ENCODE measurements at regions of chr13 and their contacts with region 1.

Region 1: DNA sequence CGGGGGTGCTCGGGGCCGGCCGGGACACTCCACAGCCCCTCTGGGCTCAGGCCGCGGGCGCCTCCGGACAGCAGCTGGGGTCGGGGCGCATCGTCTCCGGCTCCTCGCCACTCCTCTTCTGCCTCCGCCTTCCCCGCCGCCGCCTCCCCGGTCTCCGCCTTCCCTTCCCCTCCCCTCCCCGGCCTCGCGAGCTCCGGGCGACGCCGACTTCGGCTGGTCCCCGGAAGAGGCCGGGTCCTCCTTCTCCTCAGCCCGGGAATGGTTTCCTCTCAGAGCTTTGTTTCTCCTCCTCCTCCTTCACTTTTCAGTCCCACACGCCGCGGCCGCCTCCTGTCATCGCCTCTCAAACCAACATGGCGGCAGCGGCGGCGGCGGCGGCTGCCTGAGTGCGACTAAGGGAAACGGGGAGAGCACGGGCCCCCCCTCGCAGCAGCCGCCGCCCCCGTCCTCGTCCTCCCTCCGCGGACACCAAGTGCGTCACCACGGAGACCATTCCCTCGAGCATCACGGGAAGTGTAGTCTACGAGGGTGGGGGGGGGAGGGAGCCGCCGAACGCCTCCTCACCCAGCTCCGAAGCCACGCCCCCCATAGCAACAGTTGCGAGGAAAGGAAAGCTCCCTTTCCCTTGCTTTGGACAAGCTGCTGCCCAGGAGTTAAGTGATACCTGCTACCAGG is at the start of gene UBL3:
- DNase-seq: peak; percentile 98
- ATAC-seq: peak; percentile 97
- total RNA-seq, gene UBL3: 22.3 TPM

Region 2: GRCh38 chr13:28778308-28779215 is 1071.8 kb before region 1 on chr13:
- intact Hi-C with region 1: no loop called
- DNase-seq: no peak
- ATAC-seq: no peak

Region 3: GRCh38 chr13:28958018-28958417 is 892.3 kb before region 1 on chr13:
- intact Hi-C with region 1: no loop called
- DNase-seq: no peak
- ATAC-seq: no peak

Region 4: DNA sequence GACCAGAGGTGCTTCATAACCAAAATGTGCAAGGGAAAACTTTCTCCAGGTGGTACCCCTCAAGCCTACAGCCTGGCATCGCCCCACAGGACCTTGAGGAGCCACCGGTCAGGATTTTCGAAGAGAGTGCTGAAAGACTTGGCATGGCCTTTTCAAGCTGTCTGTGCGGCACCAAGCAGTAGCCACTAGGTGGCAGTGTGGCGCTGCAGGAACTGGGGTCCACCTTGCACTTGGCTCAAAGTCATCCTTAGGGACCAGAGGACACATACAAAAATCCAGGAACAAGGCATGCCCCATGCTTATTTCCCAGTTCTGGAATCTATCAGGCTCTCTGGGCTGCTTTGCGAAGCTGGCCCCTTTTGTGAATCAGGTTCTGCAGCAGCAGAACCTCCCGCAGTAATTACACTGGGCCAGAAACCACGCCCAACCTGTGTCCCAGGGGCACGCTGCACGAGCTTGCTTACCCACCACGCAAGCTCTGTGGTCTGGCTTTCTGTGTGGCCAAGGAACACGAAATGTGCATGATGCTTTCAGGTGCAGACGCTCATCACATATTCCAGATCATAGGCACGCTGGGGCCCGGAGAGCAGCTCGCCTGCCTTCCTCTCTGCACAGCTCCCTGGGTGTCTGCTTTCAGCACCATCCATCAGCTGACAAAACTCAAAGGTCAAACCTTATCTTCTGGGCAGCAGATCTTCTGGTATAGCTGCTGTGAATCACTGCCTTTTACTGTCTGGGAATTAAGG is 342.1 kb before region 1 on chr13:
- intact Hi-C with region 1: loop called (anchors 10 kb)
- DNase-seq: peak; percentile 90
- ATAC-seq: peak; percentile 87

Region 5: DNA sequence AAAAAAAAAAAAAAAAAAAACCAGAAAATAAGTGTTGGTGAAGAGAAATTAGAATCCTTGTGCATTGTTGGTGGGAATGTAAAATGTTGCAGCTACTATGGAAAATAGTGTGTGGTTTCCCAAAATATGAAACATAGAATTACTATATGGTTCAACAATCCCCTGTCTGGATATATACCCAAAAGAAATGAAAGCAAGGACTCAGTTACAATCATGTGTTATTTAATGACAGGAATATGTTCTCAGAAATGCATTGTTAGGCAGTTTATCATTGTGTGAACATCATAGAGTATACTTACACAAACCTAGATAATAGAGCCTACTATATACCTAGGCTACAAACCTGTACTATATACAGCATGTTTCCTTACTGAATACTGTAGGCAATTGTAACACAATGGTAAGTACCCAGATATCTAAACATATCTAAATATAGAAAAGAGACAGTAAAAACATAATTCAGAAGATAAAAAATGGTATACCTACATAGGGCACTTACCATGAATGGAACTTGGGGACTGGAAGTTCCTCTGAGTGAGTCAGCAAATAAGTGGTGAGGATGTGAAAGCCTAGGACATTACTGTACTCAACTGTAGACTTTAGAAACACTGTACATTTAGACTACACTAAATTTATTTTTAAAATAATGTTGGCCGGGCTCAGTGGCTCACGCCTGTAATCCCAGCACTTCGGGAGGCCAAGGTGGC is 229.2 kb before region 1 on chr13:
- intact Hi-C with region 1: no loop called
- DNase-seq: no peak
- ATAC-seq: no peak

Region 6: DNA sequence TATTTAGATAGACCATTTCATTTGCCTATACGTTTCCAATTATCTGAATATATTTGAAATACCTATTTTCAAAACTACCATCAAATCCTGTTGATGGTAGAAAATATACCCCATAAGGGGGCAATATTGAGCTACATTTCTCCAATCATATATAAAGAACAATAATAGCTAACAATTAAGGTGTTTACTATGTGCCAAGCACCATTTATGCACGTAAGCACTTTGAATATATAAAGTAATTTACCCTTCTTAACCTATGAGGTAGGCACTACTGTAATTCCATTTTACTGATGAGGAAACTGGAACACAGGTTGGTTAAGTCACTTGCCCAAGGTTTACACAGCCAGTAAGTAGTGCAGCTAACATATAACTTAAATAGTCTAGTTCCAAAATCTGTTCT is 79.1 kb before region 1 on chr13:
- intact Hi-C with region 1: loop called (anchors 5 kb)
- DNase-seq: no peak
- ATAC-seq: no peak

Region 7: GRCh38 chr13:29923554-29924481 is 73.5 kb after region 1 on chr13:
- intact Hi-C with region 1: loop called (anchors 2 kb)
- DNase-seq: peak; percentile 79
- ATAC-seq: peak; percentile 80

Region 8: GRCh38 chr13:30078059-30078458 is 227.7 kb after region 1 on chr13:
- intact Hi-C with region 1: no loop called
- DNase-seq: no peak
- ATAC-seq: no peak

Region 9: GRCh38 chr13:30114571-30115256 is 264.4 kb after region 1 on chr13:
- intact Hi-C with region 1: loop called (anchors 2 kb)
- DNase-seq: peak; percentile 93
- ATAC-seq: peak; percentile 86